ENCODE measurements at regions of chr1 and their contacts with region 1.

Region 1: GRCh38 chr1:201608635-201609395 is 69.9 kb downstream of the NAV1 start:
- DNase-seq: peak; percentile 17
- H3K4me3 ChIP-seq: no peak overlapping the region
- H3K27ac ChIP-seq: peak overlapping the region; percentile 20
- H3K4me1 ChIP-seq: peaks cover 29% of the 10 kb centered on the region
- H3K27me3 ChIP-seq: no peaks in the 10 kb centered on the region
- CTCF ChIP-seq: no peak
- POLR2A ChIP-seq: no peak

Region 2: DNA sequence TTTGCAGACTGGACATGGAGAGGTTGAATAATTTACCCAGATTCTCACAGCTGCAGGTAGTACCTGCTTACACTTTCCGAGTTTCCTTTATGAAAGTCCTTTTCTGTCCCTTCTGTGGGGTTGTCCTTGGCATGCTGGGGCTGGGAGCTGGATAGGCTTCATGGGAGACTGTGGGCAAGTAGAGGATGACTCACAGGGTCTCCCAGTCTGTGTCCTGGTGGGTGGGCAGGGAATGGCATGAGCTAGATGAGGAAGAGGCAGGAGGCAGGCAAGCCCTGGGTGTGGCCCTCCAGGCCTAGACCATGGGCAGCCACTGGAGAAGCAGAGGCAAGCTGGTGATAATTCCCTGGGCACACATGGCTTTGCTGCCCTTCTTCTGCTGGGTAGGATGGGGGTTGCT is 10.7 kb after region 1 on chr1:
- CTCF ChIA-PET with region 1: interaction called, 10 read pairs
- POLR2A ChIA-PET with region 1: no interaction called
- dilution Hi-C with region 1: no loop called
- intact Hi-C with region 1: no loop called
- DNase-seq: no peak
- H3K4me3 ChIP-seq: no peak overlapping the region
- H3K27ac ChIP-seq: no peak overlapping the region
- H3K4me1 ChIP-seq: no peaks in the 10 kb centered on the region
- H3K27me3 ChIP-seq: no peaks in the 10 kb centered on the region
- CTCF ChIP-seq: no peak
- POLR2A ChIP-seq: no peak

Region 3: GRCh38 chr1:201676197-201676596 is 67.4 kb after region 1 on chr1:
- CTCF ChIA-PET with region 1: no interaction called
- POLR2A ChIA-PET with region 1: no interaction called
- dilution Hi-C with region 1: no loop called
- intact Hi-C with region 1: no loop called
- DNase-seq: peak; percentile 34
- H3K4me3 ChIP-seq: no peak overlapping the region
- H3K27ac ChIP-seq: no peak overlapping the region
- H3K4me1 ChIP-seq: peaks cover 16% of the 10 kb centered on the region
- H3K27me3 ChIP-seq: no peaks in the 10 kb centered on the region
- CTCF ChIP-seq: no peak
- POLR2A ChIP-seq: no peak

Measured in endothelial cell of umbilical vein (primary cell).